CD8-positive, alpha-beta T cell (primary cell): ENCODE measurements at regions of chr16 and their contacts with region 1.

Region 1: GRCh38 chr16:78333808-78334207 is 234.4 kb downstream of the WWOX start:
- DNase-seq: no peak
- ATAC-seq: no peak
- H3K4me3 ChIP-seq: no peak overlapping the region
- H3K4me3 Mint-ChIP-seq: no peak overlapping the region
- H3K27ac ChIP-seq: no peak overlapping the region
- H3K27ac Mint-ChIP-seq: no peak overlapping the region
- H3K4me1 ChIP-seq: no peaks in the 10 kb centered on the region
- H3K4me1 Mint-ChIP-seq: no peaks in the 10 kb centered on the region
- H3K27me3 ChIP-seq: no peaks in the 10 kb centered on the region
- H3K27me3 Mint-ChIP-seq: no peaks in the 10 kb centered on the region
- CTCF ChIP-seq: no peak

Region 2: DNA sequence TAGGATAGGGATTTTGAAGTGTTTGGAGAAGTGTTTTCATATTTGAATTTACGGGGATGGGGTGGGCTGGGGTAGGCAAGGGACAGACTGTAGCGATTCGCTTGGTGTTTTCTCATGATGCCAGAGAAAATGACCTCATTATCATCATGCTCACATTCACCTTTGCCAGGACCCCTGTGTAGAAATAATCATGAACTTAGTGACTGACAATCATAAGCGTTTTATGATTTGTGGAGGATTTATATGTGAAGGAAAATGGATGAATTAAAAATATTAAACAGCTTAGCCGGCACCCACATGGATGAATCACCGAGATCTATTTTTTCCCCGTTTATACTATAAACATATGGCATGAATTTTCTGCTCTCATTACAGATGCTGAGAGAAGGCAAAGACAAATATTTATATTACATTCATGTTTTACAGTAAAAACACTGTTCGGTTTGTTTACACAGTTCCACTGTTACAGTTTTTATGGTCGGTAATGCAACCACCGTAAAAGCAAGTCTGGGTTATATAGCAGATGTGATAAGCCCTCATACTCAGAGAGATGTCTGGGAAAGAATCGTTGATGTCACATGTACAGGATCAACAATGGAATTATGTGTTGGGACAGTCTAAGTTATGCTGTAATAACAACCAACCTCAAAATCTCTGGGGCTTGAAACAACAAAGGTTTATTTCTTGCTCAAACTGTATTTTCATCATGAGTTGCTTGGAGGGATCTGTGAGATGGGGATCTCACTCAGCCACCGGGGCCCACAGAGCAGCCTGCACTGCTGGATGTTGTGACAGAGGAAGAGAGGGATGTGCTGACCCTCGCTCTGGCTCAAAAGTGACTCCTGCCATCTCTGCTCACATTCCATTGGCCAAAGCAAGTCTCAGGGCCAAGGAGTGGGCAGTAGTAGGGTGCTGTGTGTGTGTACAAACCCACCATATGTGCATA is 149.3 kb before region 1 on chr16:
- CTCF ChIA-PET with region 1: no interaction called
- POLR2A ChIA-PET with region 1: no interaction called
- intact Hi-C with region 1: no loop called
- DNase-seq: no peak
- ATAC-seq: no peak
- H3K4me3 ChIP-seq: no peak overlapping the region
- H3K4me3 Mint-ChIP-seq: no peak overlapping the region
- H3K27ac ChIP-seq: no peak overlapping the region
- H3K27ac Mint-ChIP-seq: no peak overlapping the region
- H3K4me1 ChIP-seq: no peaks in the 10 kb centered on the region
- H3K4me1 Mint-ChIP-seq: no peaks in the 10 kb centered on the region
- H3K27me3 ChIP-seq: no peaks in the 10 kb centered on the region
- H3K27me3 Mint-ChIP-seq: no peaks in the 10 kb centered on the region
- CTCF ChIP-seq: no peak

Region 3: GRCh38 chr16:78353610-78354275 is 19.9 kb after region 1 on chr16:
- CTCF ChIA-PET with region 1: no interaction called
- POLR2A ChIA-PET with region 1: no interaction called
- intact Hi-C with region 1: loop called (anchors 1 kb)
- DNase-seq: no peak
- ATAC-seq: no peak
- H3K4me3 ChIP-seq: no peak overlapping the region
- H3K4me3 Mint-ChIP-seq: no peak overlapping the region
- H3K27ac ChIP-seq: no peak overlapping the region
- H3K27ac Mint-ChIP-seq: no peak overlapping the region
- H3K4me1 ChIP-seq: no peaks in the 10 kb centered on the region
- H3K4me1 Mint-ChIP-seq: no peaks in the 10 kb centered on the region
- H3K27me3 ChIP-seq: no peaks in the 10 kb centered on the region
- H3K27me3 Mint-ChIP-seq: no peaks in the 10 kb centered on the region
- CTCF ChIP-seq: no peak